Vagina (tissue), 2 donors: ENCODE measurements at regions of chr3 and their contacts with region 1.

Region 1: GRCh38 chr3:58324391-58325390 is 8.0 kb upstream of the PXK start:
- DNase-seq: no peak
- H3K4me3 ChIP-seq: no peak overlapping the region
- H3K27ac ChIP-seq: peak overlapping the region; percentile 35
- H3K4me1 ChIP-seq: peaks cover 12% of the 10 kb centered on the region
- H3K27me3 ChIP-seq: no peaks in the 10 kb centered on the region
- CTCF ChIP-seq: no peak
- POLR2A ChIP-seq: no peak

Region 2: GRCh38 chr3:57682284-57682683 is 642.4 kb before region 1 on chr3:
- intact Hi-C with region 1: no loop called
- DNase-seq: no peak
- H3K4me3 ChIP-seq: no peak overlapping the region
- H3K27ac ChIP-seq: no peak overlapping the region
- H3K4me1 ChIP-seq: peaks cover 39% of the 10 kb centered on the region
- H3K27me3 ChIP-seq: no peaks in the 10 kb centered on the region
- CTCF ChIP-seq: no peak
- POLR2A ChIP-seq: no peak

Region 3: GRCh38 chr3:58414538-58415197 is 90.0 kb after region 1 on chr3:
- intact Hi-C with region 1: loop called (anchors 5 kb)
- DNase-seq: no peak
- H3K4me3 ChIP-seq: no peak overlapping the region
- H3K27ac ChIP-seq: peak overlapping the region; percentile 25
- H3K4me1 ChIP-seq: peaks cover 54% of the 10 kb centered on the region
- H3K27me3 ChIP-seq: no peaks in the 10 kb centered on the region
- CTCF ChIP-seq: peak; percentile 81 to 83 (median 82)
- POLR2A ChIP-seq: no peak

Region 4: GRCh38 chr3:58532794-58533220 is 208.1 kb after region 1 on chr3:
- intact Hi-C with region 1: loop called (anchors 10 kb)
- DNase-seq: no peak
- H3K4me3 ChIP-seq: no peak overlapping the region
- H3K27ac ChIP-seq: no peak overlapping the region
- H3K4me1 ChIP-seq: peaks cover 50% of the 10 kb centered on the region
- H3K27me3 ChIP-seq: no peaks in the 10 kb centered on the region
- CTCF ChIP-seq: peak; percentile 59 to 95 (median 78)
- POLR2A ChIP-seq: no peak